ENCODE measurements at regions of chr16 and their contacts with region 1.

Region 1: DNA sequence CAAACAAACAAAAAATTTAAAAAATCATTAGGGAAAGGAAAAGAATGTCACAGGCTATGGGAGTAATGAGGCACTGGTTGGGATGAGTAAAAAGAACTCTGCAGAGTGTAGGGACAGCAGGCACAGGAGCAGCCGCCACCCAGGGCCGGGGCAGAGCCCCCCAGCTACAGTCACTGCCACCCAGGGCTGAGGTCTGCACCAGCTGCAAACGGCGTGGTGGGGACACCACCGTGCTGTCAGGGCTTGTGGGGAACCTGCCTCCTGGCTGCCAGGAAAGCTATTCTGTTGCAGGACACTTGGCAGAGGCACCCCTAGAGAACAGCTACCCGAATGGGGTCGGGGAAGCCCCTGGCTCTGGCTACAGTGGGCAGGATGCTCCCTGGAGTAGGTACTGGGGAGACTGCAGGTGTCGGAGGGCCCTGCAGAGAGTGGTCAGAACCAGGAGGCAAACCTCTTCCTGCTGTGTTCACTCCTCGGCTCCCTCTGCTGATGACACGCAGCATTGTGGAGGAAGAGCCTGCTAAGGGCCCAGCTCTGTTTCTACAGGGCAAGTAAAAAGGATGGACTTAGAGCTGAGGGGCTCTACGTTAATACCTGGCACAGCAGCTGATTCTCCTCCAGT is 32.3 kb upstream of the CAPN15 start:
- DNase-seq: peak; percentile 4
- ATAC-seq: peak; percentile 94
- H3K4me3 ChIP-seq: no peak overlapping the region
- H3K27ac ChIP-seq: no peak overlapping the region
- H3K4me1 ChIP-seq: no peaks in the 10 kb centered on the region
- H3K27me3 ChIP-seq: no peaks in the 10 kb centered on the region
- CTCF ChIP-seq: no peak; the same call in 1 of the 2 replicates

Region 2: DNA sequence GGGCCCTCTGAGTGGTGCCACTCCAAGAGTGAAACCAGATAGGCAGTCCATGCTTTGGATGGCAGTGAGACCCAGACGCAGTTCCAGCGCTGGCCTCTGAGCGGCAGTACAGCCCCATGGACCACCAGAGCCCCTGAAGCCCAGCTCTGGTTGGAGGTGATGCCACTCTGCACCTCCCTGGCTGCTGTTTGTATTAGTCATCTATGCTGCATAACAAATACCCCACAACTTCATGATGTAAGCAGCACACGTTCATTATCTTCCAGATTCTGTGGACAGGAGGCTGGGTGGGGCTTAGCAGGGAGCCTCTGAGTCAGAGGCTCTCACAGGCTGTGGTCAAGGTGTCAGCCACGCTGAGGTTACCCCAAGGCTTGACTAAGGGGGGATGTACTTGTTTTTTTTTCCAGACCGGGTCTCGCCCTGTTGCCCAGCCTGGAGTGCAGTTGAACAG is 103.3 kb before region 1 on chr16:
- CTCF ChIA-PET with region 1: interaction called, 4 read pairs
- POLR2A ChIA-PET with region 1: no interaction called
- in situ Hi-C with region 1: no loop called
- intact Hi-C with region 1: loop called (anchors 5 kb)
- DNase-seq: no peak
- ATAC-seq: peak; percentile 71
- H3K4me3 ChIP-seq: no peak overlapping the region
- H3K27ac ChIP-seq: no peak overlapping the region
- H3K4me1 ChIP-seq: peaks cover 17% of the 10 kb centered on the region
- H3K27me3 ChIP-seq: no peaks in the 10 kb centered on the region
- CTCF ChIP-seq: peak; percentile 93

Region 3: GRCh38 chr16:483341-484075 is 11.7 kb before region 1 on chr16:
- CTCF ChIA-PET with region 1: interaction called, 15 read pairs
- POLR2A ChIA-PET with region 1: no interaction called
- in situ Hi-C with region 1: no loop called
- intact Hi-C with region 1: no loop called
- DNase-seq: no peak
- ATAC-seq: no peak
- H3K4me3 ChIP-seq: no peak overlapping the region
- H3K27ac ChIP-seq: no peak overlapping the region
- H3K4me1 ChIP-seq: no peaks in the 10 kb centered on the region
- H3K27me3 ChIP-seq: no peaks in the 10 kb centered on the region
- CTCF ChIP-seq: no peak

Measured in Panc1 (cell line).